MCF 10A (cell line): ENCODE measurements at regions of chr11 and their contacts with region 1.

Region 1: DNA sequence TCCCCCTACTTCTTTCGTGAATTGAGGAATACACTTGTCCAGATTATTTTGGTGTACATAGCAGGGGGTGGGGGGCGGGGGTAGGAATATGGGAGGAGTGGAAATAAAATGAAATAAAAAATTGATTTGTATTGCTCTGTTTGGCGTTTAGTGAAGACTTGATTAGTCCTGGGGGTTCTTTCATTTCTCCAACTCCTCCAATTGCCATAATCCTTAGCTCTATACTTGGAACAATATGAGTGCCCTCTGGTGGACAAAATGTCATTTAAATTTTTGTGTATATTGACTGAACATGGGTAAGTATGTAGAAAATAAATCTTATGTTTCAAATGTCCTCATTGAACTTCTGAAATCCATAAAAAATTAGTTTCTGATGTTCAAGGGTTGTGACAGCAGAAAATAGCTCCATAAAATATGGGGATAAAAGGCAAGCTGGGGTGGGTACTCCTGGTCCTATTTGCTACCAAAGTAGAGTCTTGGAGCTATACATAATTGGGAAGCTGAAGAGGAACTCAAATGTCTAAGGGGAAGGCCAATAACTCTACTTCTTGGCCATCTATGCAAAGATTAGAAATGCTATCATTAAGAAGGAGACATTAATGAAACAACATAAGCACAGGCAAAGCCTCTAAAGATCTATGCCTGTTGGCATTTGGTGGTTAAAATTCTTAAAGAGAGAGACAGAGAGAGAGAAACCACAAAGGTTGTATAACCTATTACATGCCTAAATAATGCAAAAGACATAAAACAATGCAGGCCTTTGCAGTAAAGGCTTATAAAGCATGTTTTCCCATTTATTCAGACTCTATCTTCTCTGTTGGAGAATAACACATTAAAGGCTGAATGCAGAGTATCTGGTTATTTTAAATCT is 421.6 kb downstream of the METTL15 start:
- DNase-seq: peak; percentile 59
- H3K4me3 Mint-ChIP-seq: no peak overlapping the region
- H3K27ac Mint-ChIP-seq: no peak overlapping the region
- H3K4me1 Mint-ChIP-seq: peaks cover 5% of the 10 kb centered on the region
- H3K27me3 Mint-ChIP-seq: no peaks in the 10 kb centered on the region
- CTCF ChIP-seq: peak; percentile 38

Region 2: DNA sequence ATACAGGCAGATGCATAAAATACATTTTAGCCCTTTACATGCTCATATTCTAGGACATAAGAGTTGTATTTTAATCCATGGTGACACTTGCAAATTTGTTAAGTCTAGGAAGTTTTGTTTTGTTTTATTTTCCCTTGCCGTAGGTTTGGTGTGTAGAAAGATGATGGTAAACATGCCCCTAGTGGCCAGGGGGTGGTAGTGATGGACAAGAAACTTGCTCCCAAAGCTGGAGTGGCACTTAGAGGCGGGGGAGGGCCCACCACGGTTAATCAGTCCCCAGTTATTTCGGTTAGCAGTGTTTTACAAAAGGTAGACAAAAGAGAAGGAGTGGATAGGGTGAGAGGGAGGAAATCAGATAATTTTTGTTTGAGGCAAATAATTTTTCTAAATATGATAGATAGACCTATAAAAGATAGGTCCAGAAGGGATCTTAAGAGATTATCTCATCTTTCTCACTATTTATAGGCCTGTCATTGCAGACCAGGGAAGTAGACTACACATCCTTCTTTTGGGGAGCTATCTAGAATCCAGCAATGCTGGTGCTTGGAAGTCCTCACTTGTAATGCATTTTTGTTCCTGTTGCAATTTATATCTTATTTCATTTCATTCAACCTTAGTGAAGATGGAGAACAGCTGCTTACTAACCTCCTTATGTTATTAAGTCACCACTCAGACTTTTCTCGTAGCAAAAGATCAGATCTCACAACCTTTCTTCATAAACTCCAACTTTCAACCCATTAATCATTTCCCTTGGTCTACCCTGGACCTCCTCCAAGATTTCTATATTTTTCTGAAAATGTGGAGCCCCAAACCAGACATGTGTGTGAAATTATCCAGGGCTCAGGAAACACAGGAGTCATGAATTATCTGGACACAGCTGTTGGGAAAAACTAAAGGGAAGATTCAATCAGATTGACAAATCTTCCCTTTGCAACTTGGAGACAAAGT is 823.6 kb before region 1 on chr11:
- CTCF ChIA-PET with region 1: interaction called, 139 read pairs
- POLR2A ChIA-PET with region 1: interaction called, 4 read pairs
- intact Hi-C with region 1: no loop called
- DNase-seq: peak; percentile 50
- H3K4me3 Mint-ChIP-seq: no peak overlapping the region
- H3K27ac Mint-ChIP-seq: no peak overlapping the region
- H3K4me1 Mint-ChIP-seq: peaks cover 6% of the 10 kb centered on the region
- H3K27me3 Mint-ChIP-seq: no peaks in the 10 kb centered on the region
- CTCF ChIP-seq: peak; percentile 54

Region 3: GRCh38 chr11:27839226-27839870 is 690.4 kb before region 1 on chr11:
- CTCF ChIA-PET with region 1: interaction called, 14 read pairs
- POLR2A ChIA-PET with region 1: no interaction called
- intact Hi-C with region 1: loop called (anchors 10 kb)
- DNase-seq: peak; percentile 28
- H3K4me3 Mint-ChIP-seq: no peak overlapping the region
- H3K27ac Mint-ChIP-seq: peak overlapping the region; percentile 67
- H3K4me1 Mint-ChIP-seq: peaks cover 7% of the 10 kb centered on the region
- H3K27me3 Mint-ChIP-seq: no peaks in the 10 kb centered on the region
- CTCF ChIP-seq: peak; percentile 43

Region 4: DNA sequence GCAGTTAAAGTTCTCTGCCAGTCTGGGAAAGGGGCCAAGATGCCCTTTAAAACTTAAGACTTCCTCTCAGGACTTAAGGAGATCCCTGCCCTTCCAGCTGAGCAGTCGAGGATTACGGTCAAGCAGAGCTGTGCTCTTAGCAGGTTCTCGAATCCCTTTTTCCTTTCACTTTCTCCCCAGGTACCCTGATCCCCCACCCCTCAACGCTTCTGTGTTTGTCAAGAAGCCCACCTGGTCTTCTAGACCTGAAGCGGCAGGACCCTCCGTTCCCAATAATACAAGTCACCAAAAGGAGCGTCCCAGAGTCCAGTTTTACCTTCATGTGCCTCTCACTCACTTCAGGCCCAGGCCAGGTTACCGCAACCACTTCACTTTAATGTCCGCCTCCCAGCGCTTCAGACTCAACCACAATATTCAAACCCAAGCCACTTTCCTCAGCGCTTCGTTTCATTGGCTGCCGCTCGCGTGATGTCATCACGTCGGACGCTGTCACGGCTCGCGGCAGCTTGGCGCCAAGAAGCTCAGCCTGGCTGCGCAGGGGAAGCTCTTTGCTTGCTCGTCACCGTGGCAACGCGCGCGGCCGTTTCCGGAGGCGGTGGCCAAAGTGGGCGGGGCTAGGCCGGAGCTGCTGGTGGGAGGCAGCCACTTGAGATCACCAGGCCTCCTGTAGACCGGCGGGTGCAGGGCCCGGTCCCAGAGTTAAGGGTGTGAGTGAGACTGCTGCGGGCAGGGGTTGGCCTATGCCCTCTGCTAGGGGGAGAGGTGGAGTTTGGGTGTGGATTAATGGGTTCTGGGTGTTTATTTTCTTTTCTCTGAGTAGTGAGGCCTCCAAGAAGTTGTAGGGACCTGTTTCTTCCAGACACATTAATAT is 421.8 kb before region 1 on chr11 and contains the starts of genes KIF18A and METTL15:
- CTCF ChIA-PET with region 1: interaction called, 3 read pairs
- POLR2A ChIA-PET with region 1: interaction called, 6 read pairs
- intact Hi-C with region 1: loop called (anchors 5 kb)
- DNase-seq: peak; percentile 98
- H3K4me3 Mint-ChIP-seq: peak within 1 kb of the TSS; percentile 98
- H3K27ac Mint-ChIP-seq: peak within 1 kb of the TSS; percentile 100
- H3K4me1 Mint-ChIP-seq: peaks cover 48% of the 10 kb centered on the region
- H3K27me3 Mint-ChIP-seq: no peaks in the 10 kb centered on the region
- CTCF ChIP-seq: no peak
- total RNA-seq, gene KIF18A: 8.9 and 12.9 TPM in 2 replicates
- total RNA-seq, gene METTL15: 16.8 and 19.9 TPM in 2 replicates

Region 5: DNA sequence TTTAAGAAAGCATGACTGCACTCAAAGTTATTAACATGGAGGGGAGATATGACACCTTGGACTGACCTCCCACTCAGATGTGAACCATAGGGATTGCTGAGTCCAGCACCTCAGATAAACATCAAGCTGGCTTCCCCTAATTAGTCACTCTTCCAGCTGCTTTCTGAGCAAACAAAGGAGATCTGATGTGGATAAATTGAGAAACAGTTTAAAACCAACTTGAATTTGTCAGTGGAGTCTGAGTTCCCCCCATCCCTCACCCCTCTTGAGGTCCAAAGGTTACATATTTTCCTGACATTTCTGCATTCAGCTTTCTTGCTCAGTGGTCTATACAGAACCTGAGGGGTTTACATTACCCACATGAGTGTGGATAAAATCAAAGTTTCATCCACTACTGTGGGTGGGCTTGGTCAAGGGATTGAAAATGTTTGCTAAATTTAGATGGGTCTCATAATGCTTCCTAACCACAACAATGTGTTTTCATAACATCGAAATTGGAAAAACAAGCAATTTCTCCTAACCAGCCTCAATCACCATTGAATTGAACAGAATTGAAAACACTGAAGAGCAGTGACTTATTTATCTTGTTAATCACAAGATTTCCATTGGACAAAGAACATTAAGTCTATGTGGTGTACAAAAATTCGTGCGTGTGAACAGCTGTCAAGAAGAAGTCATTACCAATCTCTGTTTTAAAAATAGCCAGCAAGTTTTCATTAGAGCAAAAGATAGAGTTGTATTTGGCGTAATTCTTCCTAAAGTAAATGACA is 129.3 kb before region 1 on chr11:
- CTCF ChIA-PET with region 1: no interaction called
- POLR2A ChIA-PET with region 1: no interaction called
- intact Hi-C with region 1: no loop called
- DNase-seq: peak; percentile 16
- H3K4me3 Mint-ChIP-seq: no peak overlapping the region
- H3K27ac Mint-ChIP-seq: no peak overlapping the region
- H3K4me1 Mint-ChIP-seq: no peaks in the 10 kb centered on the region
- H3K27me3 Mint-ChIP-seq: no peaks in the 10 kb centered on the region
- CTCF ChIP-seq: no peak

Region 6: GRCh38 chr11:28547321-28547741 is 17.6 kb after region 1 on chr11:
- CTCF ChIA-PET with region 1: interaction called, 10 read pairs
- POLR2A ChIA-PET with region 1: no interaction called
- intact Hi-C with region 1: no loop called
- DNase-seq: no peak
- H3K4me3 Mint-ChIP-seq: no peak overlapping the region
- H3K27ac Mint-ChIP-seq: no peak overlapping the region
- H3K4me1 Mint-ChIP-seq: no peaks in the 10 kb centered on the region
- H3K27me3 Mint-ChIP-seq: no peaks in the 10 kb centered on the region
- CTCF ChIP-seq: no peak

Region 7: GRCh38 chr11:29159552-29160465 is 630.0 kb after region 1 on chr11:
- CTCF ChIA-PET with region 1: interaction called, 18 read pairs
- POLR2A ChIA-PET with region 1: no interaction called
- intact Hi-C with region 1: no loop called
- DNase-seq: peak; percentile 80
- H3K4me3 Mint-ChIP-seq: no peak overlapping the region
- H3K27ac Mint-ChIP-seq: no peak overlapping the region
- H3K4me1 Mint-ChIP-seq: peaks cover 11% of the 10 kb centered on the region
- H3K27me3 Mint-ChIP-seq: no peaks in the 10 kb centered on the region
- CTCF ChIP-seq: peak; percentile 77

Region 8: DNA sequence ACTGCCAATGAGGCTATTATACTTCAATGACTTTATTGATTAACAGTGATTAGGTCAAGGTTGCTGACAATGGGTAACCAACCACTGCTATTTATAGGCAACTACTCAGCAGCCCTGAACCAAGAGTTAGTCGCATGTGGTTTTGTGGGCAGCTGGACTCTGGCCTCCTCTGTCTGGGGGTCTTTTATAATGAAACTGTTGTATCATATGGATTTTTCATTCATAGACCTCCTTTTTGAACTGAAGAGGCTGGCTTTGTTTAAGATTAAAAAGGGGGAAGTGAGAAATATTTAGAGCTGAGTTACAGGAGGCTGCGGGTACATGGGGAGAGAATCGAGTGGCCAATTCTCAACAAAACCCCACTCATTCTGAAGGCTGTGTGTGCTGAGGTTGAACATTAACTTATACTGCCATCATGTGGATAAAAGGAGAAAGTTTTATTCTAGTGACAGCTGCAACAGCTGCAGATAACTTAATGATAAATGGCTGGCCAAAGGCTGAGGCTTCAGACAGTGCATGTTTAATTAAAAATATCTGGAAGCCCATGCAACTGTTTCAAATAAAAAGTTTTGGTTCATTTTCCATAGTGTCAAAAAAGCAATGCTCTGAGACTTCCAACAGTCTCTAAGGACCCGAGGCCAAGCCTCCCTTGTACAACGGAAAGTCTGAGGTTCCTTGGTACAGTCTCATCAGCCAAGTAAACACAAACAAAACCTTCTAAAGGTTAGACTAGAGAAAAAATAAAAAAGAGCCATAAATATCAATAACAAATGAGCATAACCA is 804.4 kb after region 1 on chr11:
- CTCF ChIA-PET with region 1: interaction called, 19 read pairs
- POLR2A ChIA-PET with region 1: no interaction called
- intact Hi-C with region 1: loop called (anchors 10 kb)
- DNase-seq: peak; percentile 56
- H3K4me3 Mint-ChIP-seq: no peak overlapping the region
- H3K27ac Mint-ChIP-seq: no peak overlapping the region
- H3K4me1 Mint-ChIP-seq: peaks cover 3% of the 10 kb centered on the region
- H3K27me3 Mint-ChIP-seq: no peaks in the 10 kb centered on the region
- CTCF ChIP-seq: peak; percentile 50